CD8-positive, alpha-beta T cell (primary cell): ENCODE measurements at regions of chr1 and their contacts with region 1.

Region 1: DNA sequence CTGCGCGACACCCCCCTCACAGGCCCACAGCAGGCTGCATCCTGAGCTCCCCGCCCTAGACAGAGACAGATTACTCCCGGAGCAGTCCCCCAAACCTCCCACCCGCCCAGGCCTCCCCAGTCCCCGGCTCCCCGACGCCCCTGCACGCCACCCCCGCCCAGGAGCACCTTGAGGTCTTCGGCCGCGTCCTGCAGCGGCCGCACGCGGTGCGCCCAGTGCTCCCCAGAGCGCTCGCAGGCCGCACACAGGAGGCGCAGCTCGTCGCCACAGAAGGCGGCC is 709 bp downstream of the TRIM11 start:
- DNase-seq: peak in 1 of 9 experiments; percentile 52
- ATAC-seq: peak; percentile 8
- H3K4me3 ChIP-seq: peak overlapping the region; percentile 75 to 88
- H3K4me3 Mint-ChIP-seq: peak overlapping the region; percentile 91
- H3K27ac ChIP-seq: peak overlapping the region in 1 of 2 experiments; percentile 76
- H3K27ac Mint-ChIP-seq: peak overlapping the region; percentile 87
- H3K4me1 ChIP-seq: peaks cover 42% of the 10 kb centered on the region
- H3K4me1 Mint-ChIP-seq: peaks cover 53% of the 10 kb centered on the region
- H3K27me3 ChIP-seq: no peaks in the 10 kb centered on the region
- H3K27me3 Mint-ChIP-seq: no peaks in the 10 kb centered on the region
- CTCF ChIP-seq: no peak

Region 2: GRCh38 chr1:228109073-228109961 is 296.6 kb before region 1 on chr1 and contains the start of gene MRPL55:
- CTCF ChIA-PET with region 1: no interaction called
- POLR2A ChIA-PET with region 1: interaction called, 3 read pairs
- intact Hi-C with region 1: loop called (anchors 10 kb)
- DNase-seq: peak; percentile 97 to 100 (median 98)
- ATAC-seq: peak; percentile 97
- H3K4me3 ChIP-seq: peak within 1 kb of the TSS; percentile 93 to 98
- H3K4me3 Mint-ChIP-seq: peak within 1 kb of the TSS; percentile 95
- H3K27ac ChIP-seq: peak within 1 kb of the TSS; percentile 90 to 94
- H3K27ac Mint-ChIP-seq: peak within 1 kb of the TSS; percentile 96
- H3K4me1 ChIP-seq: peaks cover 21% of the 10 kb centered on the region
- H3K4me1 Mint-ChIP-seq: peaks cover 26% of the 10 kb centered on the region
- H3K27me3 ChIP-seq: no peaks in the 10 kb centered on the region
- H3K27me3 Mint-ChIP-seq: no peaks in the 10 kb centered on the region
- CTCF ChIP-seq: no peak
- total RNA-seq, gene MRPL55: 90.2 to 90.7 TPM

Region 3: DNA sequence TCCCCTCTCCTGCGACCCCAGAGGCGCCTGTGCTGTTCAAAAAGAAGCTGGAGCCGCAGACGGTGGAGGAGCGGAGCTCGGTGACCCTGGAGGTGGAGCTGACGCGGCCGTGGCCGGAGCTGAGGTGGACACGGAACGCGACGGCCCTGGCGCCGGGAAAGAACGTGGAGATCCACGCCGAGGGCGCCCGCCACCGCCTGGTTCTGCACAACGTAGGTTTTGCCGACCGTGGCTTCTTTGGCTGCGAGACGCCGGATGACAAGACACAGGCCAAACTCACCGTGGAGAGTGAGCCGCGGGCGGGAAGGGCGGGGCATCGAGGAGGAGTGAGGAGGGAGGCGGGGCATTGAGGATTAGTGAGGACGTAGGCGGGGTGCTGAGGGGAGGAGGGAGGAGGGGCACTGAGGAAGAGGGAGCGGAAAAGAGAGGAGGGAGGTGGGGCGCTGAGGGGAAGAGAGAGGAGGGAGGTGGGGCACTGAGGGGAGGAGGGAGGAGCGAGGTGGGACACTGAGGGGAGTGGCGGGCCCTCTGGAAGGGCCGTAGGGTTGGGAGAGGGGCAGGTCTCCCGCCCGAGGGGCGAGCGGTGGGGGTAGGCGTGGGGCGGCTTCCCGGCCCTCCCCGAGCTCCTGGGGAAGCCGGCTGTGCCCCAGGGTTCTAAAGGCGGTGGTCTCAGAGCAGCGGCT is 130.0 kb before region 1 on chr1:
- CTCF ChIA-PET with region 1: no interaction called
- POLR2A ChIA-PET with region 1: no interaction called
- intact Hi-C with region 1: loop called (anchors 2 to 5 kb)
- DNase-seq: peak; percentile 74 to 95 (median 92)
- ATAC-seq: peak; percentile 96
- H3K4me3 ChIP-seq: peak overlapping the region; percentile 75 to 81
- H3K4me3 Mint-ChIP-seq: peak overlapping the region; percentile 80
- H3K27ac ChIP-seq: peak overlapping the region; percentile 31 to 39
- H3K27ac Mint-ChIP-seq: peak overlapping the region; percentile 18
- H3K4me1 ChIP-seq: peaks cover 6% of the 10 kb centered on the region
- H3K4me1 Mint-ChIP-seq: peaks cover 12% of the 10 kb centered on the region
- H3K27me3 ChIP-seq: no peaks in the 10 kb centered on the region
- H3K27me3 Mint-ChIP-seq: no peaks in the 10 kb centered on the region
- CTCF ChIP-seq: no peak

Region 4: DNA sequence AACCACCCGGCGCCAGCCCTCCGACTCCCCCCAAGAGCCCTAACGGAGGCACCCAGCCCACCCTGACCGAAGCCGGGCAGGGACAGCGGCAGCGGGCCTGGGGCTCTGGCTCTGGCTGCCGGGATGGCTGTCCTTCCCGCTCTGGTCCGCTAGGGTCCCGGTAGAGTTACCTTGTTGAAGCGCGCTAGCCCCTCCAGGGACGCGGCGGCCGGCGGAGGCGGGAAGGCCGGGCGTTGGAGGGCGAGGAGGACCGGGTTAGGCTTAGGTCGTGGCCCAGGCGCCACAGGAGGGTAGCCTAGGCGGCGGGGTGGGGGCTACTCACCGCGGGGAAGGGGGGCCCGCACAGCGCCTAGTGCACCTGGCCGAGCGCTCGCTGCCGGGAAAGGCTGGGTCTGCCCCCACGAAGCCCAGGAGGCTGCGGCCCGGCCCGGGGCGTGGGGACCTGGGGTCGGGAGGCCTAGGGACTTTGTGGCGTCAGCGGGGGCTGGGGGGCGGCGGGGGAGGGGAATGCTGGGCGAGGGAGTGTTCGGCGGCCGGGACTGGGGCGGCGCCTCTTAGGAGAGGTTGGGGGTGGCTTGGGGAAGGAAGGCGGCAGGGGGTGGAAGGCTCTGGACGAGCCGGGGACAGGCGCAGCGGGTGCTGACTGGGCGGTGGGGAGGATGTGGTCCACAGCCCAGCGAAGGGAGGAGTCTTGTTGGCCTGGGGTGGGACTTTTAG is 10.4 kb after region 1 on chr1 and contains the start of gene TRIM17:
- CTCF ChIA-PET with region 1: no interaction called
- POLR2A ChIA-PET with region 1: interaction called, 3 read pairs
- intact Hi-C with region 1: loop called in 1 of 2 experiments (anchors 1 kb)
- DNase-seq: peak in 7 of 9 experiments; percentile 24 to 68 (median 54)
- ATAC-seq: peak; percentile 76
- H3K4me3 ChIP-seq: peak within 1 kb of the TSS; percentile 52 to 57
- H3K4me3 Mint-ChIP-seq: peak within 1 kb of the TSS; percentile 83
- H3K27ac ChIP-seq: no peak within 1 kb of the TSS
- H3K27ac Mint-ChIP-seq: peak within 1 kb of the TSS; percentile 25
- H3K4me1 ChIP-seq: peaks cover 16% of the 10 kb centered on the region
- H3K4me1 Mint-ChIP-seq: peaks cover 21% of the 10 kb centered on the region
- H3K27me3 ChIP-seq: peaks cover 0 to 4% of the 10 kb centered on the region in 2 experiments
- H3K27me3 Mint-ChIP-seq: no peaks in the 10 kb centered on the region
- CTCF ChIP-seq: no peak
- total RNA-seq, gene TRIM17: 1.1 to 1.4 TPM

Region 5: GRCh38 chr1:228457396-228458176 is 51.7 kb after region 1 on chr1:
- CTCF ChIA-PET with region 1: interaction called, 6 read pairs
- POLR2A ChIA-PET with region 1: interaction called, 17 read pairs
- intact Hi-C with region 1: loop called (anchors 1 kb)
- DNase-seq: peak; percentile 68 to 98 (median 80)
- ATAC-seq: peak; percentile 85
- H3K4me3 ChIP-seq: peak overlapping the region; percentile 69 to 91
- H3K4me3 Mint-ChIP-seq: peak overlapping the region; percentile 93
- H3K27ac ChIP-seq: peak overlapping the region; percentile 91 to 93
- H3K27ac Mint-ChIP-seq: peak overlapping the region; percentile 99
- H3K4me1 ChIP-seq: peaks cover 23% of the 10 kb centered on the region
- H3K4me1 Mint-ChIP-seq: peaks cover 39% of the 10 kb centered on the region
- H3K27me3 ChIP-seq: no peaks in the 10 kb centered on the region
- H3K27me3 Mint-ChIP-seq: peaks cover 4% of the 10 kb centered on the region
- CTCF ChIP-seq: peak; percentile 31

Region 6: GRCh38 chr1:228464487-228464983 is 58.6 kb after region 1 on chr1:
- CTCF ChIA-PET with region 1: no interaction called
- POLR2A ChIA-PET with region 1: interaction called, 17 read pairs
- intact Hi-C with region 1: loop called in 1 of 2 experiments (anchors 1 kb)
- DNase-seq: peak; percentile 75 to 95 (median 86)
- ATAC-seq: peak; percentile 96
- H3K4me3 ChIP-seq: peak overlapping the region; percentile 45 to 51
- H3K4me3 Mint-ChIP-seq: peak overlapping the region; percentile 85
- H3K27ac ChIP-seq: peak overlapping the region; percentile 18 to 41
- H3K27ac Mint-ChIP-seq: peak overlapping the region; percentile 69
- H3K4me1 ChIP-seq: peaks cover 28% of the 10 kb centered on the region
- H3K4me1 Mint-ChIP-seq: peaks cover 40% of the 10 kb centered on the region
- H3K27me3 ChIP-seq: no peaks in the 10 kb centered on the region
- H3K27me3 Mint-ChIP-seq: peaks cover 14% of the 10 kb centered on the region
- CTCF ChIP-seq: no peak

Region 7: DNA sequence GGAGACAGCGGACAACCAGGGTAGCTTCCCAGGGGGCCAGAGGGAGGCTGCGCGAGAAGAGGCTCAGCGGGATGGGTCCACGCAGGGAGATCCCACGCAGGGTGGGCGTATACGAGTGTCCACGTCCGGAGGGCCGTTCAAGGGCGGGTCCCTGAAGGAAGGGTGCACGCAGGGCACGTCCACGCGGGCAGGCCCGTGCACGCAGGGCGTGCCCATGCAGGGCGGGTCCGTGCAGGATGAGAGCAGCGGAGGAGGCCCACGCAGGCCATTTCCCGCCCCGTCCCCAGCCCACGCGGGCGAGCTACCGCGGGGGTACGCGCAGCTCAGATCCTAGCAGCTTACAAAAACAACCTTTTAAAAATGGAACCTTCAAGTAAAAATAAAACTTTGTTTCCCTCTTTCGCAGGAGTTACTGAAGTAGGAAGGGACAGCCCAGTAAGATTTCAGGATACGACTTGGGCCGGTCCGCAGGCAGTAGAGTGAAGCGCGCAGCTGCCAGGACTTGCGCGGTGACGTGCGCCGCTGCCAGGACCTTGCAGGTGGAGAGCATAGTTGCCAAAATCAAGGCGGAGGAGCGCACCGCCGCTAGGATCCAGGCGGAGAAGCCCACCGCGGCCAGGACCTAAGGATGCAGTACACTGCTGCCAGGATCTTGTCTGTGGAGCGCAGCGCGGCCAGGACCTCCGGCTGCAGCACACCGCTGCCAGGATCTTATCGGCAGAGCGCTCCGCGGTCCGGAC is 80.8 kb after region 1 on chr1:
- CTCF ChIA-PET with region 1: no interaction called
- POLR2A ChIA-PET with region 1: interaction called, 17 read pairs
- intact Hi-C with region 1: loop called (anchors 1 to 2 kb)
- DNase-seq: peak; percentile 66 to 94 (median 77)
- ATAC-seq: peak; percentile 75
- H3K4me3 ChIP-seq: peak overlapping the region; percentile 88 to 90
- H3K4me3 Mint-ChIP-seq: peak overlapping the region; percentile 98
- H3K27ac ChIP-seq: peak overlapping the region; percentile 100
- H3K27ac Mint-ChIP-seq: peak overlapping the region; percentile 100
- H3K4me1 ChIP-seq: peaks cover 31% of the 10 kb centered on the region
- H3K4me1 Mint-ChIP-seq: peaks cover 37% of the 10 kb centered on the region
- H3K27me3 ChIP-seq: no peaks in the 10 kb centered on the region
- H3K27me3 Mint-ChIP-seq: no peaks in the 10 kb centered on the region
- CTCF ChIP-seq: no peak